ENCODE measurements at regions of chr10 and their contacts with region 1.

Region 1: DNA sequence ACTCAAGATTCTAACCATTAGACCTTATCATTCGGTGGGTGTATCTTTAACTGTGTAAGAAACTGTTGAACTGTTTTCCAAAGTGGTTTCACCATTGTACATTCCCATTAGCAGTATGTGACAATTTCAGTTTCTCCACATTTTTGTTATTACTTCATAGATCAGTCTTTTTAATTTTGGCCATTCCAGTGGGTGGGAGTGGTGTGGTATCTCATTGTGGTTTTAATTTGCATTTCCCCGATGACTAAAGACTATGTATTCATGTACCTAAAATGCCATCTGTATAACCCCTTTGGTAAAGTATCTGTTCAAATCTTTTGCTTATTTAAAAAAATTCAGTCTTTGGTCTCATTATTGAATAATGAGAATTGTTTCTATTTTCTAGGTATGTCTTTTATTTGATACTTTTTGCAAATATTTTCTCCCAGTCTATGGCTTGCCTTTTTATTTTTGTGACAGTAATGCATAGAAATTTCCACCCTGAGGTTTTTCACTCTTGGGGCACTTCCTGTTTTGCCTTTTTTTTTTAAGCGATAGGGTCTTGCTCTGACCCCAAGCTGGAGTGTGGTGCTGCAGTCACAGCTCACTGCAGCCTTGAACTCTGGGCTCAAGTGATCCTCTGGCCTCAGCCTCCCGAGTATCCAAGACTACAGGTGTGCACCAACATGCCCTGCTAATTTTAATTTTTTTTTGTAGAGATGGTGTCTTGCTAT is 141.1 kb upstream of the ITGB1 start:
- DNase-seq: no peak
- H3K4me3 Mint-ChIP-seq: peak overlapping the region; percentile 11
- H3K27ac Mint-ChIP-seq: peak overlapping the region; percentile 89
- H3K4me1 Mint-ChIP-seq: peaks cover 66% of the 10 kb centered on the region
- H3K27me3 Mint-ChIP-seq: no peaks in the 10 kb centered on the region

Region 2: DNA sequence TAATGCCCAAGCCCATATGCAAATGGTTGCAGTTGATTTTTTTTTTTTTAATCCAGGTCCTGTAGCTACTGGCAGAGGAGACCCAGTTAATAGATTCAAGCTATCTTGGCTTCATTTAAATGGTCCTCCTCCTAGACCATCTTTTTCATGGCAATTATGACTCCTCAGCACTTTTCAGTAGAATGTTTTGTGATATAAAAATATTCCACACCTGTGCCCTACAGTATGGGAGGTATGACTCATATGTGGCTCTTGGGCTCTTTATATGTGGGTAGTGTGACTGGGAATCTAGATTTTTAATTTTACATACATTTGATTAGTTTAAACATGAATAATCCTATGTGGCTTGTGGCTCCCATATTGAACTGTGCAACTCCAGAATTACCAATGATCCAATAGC is 221.2 kb before region 1 on chr10:
- CTCF ChIA-PET with region 1: no interaction called
- POLR2A ChIA-PET with region 1: no interaction called
- DNase-seq: no peak
- H3K4me3 Mint-ChIP-seq: no peak overlapping the region
- H3K27ac Mint-ChIP-seq: no peak overlapping the region
- H3K4me1 Mint-ChIP-seq: no peaks in the 10 kb centered on the region
- H3K27me3 Mint-ChIP-seq: no peaks in the 10 kb centered on the region

Region 3: DNA sequence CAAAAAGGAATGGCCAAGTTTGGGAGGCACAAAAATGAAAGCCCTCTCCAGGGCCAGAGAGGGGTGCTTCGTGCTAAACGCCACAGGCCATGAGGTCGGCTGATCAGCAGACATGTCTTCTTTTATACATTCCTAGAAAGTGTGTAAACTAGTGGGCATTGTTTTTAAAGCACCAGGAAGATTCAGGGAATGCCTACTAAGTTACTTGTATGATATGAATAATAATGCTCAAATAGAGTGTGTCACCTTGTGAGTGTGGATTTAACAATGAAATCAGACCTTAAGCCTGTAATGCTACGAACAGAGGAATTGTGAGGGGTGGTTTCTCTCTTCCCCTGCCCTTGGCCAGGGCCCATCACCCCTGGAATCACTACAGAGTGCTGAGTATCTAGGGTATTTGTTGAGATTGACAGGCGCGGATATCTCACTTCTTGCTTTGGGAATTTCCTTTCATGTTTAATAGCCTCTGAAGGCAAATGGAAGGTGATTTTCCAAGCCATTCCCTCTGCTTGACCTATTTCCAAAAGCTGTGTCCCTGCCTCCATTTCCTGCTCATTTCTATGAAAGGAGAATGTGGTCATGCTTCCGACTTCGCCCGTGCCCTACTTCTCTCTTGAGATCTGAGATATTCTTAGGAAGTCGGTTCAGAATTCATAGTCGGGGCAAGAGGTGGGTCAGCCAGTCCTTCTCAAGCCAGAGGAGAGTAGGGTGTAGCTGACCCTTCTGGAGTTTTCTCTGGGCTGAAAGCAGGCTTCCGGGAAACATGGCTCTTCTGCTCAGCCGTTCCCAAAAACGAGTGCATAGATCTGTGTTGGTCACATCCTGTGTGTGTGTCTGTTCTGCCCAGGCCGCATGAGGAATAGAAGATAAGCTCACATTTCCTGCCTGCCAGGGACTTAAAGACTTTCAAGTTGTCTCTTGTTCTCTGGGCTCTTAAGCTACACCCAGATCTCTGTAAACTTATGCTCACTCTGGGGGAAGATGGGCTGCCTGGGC is 26.7 kb after region 1 on chr10:
- CTCF ChIA-PET with region 1: interaction called, 4 read pairs
- POLR2A ChIA-PET with region 1: interaction called, 12 read pairs
- DNase-seq: peak; percentile 62
- H3K4me3 Mint-ChIP-seq: peak overlapping the region; percentile 18
- H3K27ac Mint-ChIP-seq: peak overlapping the region; percentile 94
- H3K4me1 Mint-ChIP-seq: peaks cover 87% of the 10 kb centered on the region
- H3K27me3 Mint-ChIP-seq: no peaks in the 10 kb centered on the region

Region 4: DNA sequence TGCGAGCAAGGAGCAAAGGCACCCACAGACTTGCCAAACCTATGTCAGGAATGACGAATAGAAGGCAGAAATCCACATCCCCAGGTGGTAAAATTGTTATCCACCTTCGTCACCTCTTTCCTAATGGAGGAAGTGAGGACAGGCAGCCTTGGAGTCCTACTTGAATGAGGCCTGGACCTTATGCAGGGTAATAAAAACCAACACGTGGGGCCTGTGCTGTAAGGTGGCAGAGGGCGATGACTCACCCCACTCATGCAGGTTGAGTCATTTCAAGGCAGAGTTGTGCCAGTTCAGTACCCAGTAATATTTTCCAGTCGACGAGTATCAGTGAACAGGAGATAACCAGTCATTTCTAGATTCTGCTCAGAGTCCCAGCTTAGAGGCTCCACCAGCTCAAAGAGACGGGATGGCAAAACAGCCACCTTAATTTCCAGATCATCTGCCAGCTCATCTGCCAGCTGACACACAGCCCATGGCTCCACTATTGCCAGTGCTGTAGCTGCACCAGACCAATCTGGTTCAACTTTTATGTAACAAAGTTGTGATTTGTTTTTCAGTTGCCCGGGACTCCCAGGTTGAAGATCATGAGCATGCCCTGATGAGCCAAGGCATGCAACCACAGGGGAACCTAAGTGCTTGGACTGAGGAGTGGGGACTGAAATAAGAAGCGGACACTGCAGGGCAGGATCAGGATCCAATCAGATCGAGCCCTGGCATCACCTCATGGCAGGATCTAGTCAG is 35.1 kb after region 1 on chr10:
- CTCF ChIA-PET with region 1: interaction called, 5 read pairs
- POLR2A ChIA-PET with region 1: interaction called, 19 read pairs
- DNase-seq: peak; percentile 84
- H3K4me3 Mint-ChIP-seq: no peak overlapping the region
- H3K27ac Mint-ChIP-seq: peak overlapping the region; percentile 90
- H3K4me1 Mint-ChIP-seq: peaks cover 91% of the 10 kb centered on the region
- H3K27me3 Mint-ChIP-seq: no peaks in the 10 kb centered on the region

Region 5: DNA sequence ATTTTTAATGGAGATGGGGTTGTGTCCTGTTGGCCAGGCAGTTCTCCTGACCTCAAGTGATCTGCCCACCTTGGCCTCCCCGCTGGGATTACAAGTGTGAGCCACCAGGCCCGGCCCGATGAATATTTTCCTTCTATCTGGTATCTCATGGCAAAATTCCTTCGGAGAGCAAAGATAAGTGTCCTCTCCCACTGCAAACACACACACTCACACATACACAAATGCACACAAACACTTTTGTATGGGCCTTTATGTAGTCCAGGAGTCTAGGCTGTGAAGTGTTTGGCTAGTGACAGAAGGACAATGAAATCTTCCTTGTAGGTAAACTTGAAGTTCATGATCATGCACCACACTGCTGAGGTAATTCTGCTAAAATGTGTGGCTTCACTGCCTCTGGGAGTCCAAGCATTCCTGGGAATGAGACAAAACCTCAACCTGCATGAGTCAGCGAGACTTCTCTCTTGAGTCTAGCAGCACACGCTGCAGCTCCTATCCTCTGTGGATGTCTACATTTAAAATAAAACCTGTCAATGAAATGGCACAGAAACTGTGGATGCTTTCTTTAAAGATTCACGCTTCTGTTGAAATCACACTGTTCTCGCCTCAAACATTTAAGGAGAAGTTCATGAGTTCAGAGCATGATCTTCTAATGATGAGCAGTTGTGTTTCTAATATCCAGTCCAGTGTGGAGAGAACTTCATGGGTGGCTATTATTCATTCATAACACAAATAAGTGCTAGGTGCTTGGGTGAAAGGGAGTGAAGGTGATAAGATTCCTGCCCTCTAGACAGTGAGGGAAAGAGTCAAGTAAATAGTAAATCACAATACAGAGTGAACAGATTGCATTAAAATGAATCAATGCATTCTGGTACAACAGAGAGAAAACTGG is 138.9 kb after region 1 on chr10:
- CTCF ChIA-PET with region 1: no interaction called
- POLR2A ChIA-PET with region 1: no interaction called
- DNase-seq: no peak
- H3K4me3 Mint-ChIP-seq: no peak overlapping the region
- H3K27ac Mint-ChIP-seq: no peak overlapping the region
- H3K4me1 Mint-ChIP-seq: no peaks in the 10 kb centered on the region
- H3K27me3 Mint-ChIP-seq: peaks cover 19% of the 10 kb centered on the region

Measured in activated CD4-positive, alpha-beta memory T cell treated with anti-CD3 and anti-CD28 coated beads, Interleukin-2, amount 10 ng/mL, durations not matched to agents 7 days and 5 days (primary cell).